ENCODE measurements at regions of chr2 and their contacts with region 1.

Region 1: DNA sequence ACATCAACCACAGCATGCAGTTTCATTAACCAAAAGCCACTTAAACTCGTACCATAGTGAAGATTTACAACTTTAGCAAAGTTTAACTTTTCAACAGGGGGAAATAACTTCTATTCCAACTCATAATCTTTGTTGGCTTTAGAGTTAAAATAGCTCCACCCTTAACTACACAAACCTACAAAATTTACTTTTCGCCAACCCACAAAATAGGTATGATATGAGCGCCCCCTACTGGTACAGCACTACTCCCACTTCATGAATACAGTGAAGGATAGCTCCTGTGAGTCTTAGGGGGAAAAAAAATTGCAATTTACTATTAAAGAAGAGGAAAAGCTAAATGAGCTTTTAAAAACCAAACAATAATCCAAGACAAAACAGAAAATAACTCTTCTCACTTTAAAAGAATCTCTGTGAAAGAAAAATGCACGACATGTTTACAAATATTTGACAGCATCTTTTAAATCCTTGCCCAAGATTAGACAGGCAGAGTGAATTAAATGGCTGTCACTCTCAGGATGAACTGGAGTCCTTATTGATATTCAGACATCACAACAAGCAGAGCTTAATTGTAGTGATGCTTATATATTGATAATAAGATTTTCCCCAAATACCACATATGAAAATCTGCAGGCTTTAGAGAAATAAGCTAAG is 32.2 kb downstream of the TMEFF2 start:
- DNase-seq: peak; percentile 58
- H3K4me3 ChIP-seq: no peak overlapping the region
- H3K27ac ChIP-seq: no peak overlapping the region
- H3K27me3 ChIP-seq: no peaks in the 10 kb centered on the region
- CTCF ChIP-seq: peak; percentile 93

Region 2: GRCh38 chr2:191555092-191555742 is 607.3 kb before region 1 on chr2:
- CTCF ChIA-PET with region 1: interaction called, 51 read pairs
- POLR2A ChIA-PET with region 1: no interaction called
- DNase-seq: peak; percentile 61
- H3K4me3 ChIP-seq: no peak overlapping the region
- H3K27ac ChIP-seq: no peak overlapping the region
- H3K27me3 ChIP-seq: peaks cover 3% of the 10 kb centered on the region
- CTCF ChIP-seq: peak; percentile 76

Region 3: GRCh38 chr2:191800874-191801273 is 361.6 kb before region 1 on chr2:
- CTCF ChIA-PET with region 1: interaction called, 48 read pairs
- POLR2A ChIA-PET with region 1: no interaction called
- DNase-seq: no peak
- H3K4me3 ChIP-seq: no peak overlapping the region
- H3K27ac ChIP-seq: no peak overlapping the region
- H3K27me3 ChIP-seq: no peaks in the 10 kb centered on the region
- CTCF ChIP-seq: no peak

Region 4: DNA sequence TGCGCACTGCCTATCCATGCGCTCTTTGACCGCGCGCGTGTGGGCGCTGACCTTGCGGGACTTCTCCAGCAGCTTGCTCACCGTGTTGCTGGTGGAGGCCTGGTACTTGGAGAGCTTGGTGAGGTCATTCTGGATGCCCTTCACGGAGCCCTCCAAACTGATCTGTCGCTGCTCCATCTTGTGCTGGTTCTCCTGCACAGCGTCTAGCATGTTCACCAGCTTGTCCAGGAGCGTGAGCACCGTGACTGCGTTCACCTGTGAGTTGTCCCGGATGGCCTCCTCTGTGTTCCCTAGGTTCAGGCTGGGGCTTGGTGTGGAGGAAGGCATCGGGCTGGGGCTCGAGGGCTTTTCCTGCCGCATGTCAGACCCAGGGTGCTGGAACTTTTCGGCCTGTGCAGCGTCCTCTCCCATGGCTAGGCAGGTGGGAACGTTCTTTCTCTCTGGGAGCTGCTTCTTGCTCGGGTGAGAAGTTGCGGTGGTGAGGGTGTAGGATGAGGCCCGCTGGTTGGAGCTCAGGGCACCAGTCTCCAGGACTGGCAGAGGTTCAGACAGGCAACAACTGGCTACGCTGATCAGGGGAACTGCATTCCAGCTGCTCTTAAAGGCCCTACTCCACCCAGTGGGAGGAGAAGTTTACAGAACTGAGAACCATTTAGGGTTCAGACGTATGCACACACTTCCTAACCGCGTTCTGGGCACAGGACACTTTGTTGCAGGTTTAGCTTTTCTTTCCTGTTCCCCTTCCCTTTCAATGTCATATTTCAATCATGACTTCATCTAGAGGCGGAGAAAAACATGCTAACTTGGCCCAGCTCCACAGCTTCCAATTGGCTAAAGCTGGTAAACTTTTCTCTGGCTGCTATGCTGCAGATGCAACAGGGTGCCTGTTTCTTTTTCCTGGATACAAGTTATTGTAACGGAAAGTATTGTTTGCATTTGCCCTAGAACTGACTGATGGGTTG is 315.7 kb before region 1 on chr2 and contains the start of gene CAVIN2:
- CTCF ChIA-PET with region 1: interaction called, 50 read pairs
- POLR2A ChIA-PET with region 1: no interaction called
- DNase-seq: peak; percentile 82
- H3K4me3 ChIP-seq: peak within 1 kb of the TSS; percentile 63
- H3K27ac ChIP-seq: peak within 1 kb of the TSS; percentile 93
- H3K27me3 ChIP-seq: no peaks in the 10 kb centered on the region
- CTCF ChIP-seq: no peak
- polyA plus RNA-seq, gene CAVIN2: 22.0 and 26.1 TPM in 2 replicates

Region 5: GRCh38 chr2:191885650-191886049 is 276.9 kb before region 1 on chr2:
- CTCF ChIA-PET with region 1: no interaction called
- POLR2A ChIA-PET with region 1: no interaction called
- DNase-seq: no peak
- H3K4me3 ChIP-seq: no peak overlapping the region
- H3K27ac ChIP-seq: no peak overlapping the region
- H3K27me3 ChIP-seq: no peaks in the 10 kb centered on the region
- CTCF ChIP-seq: no peak

Region 6: GRCh38 chr2:192010073-192010472 is 152.4 kb before region 1 on chr2:
- CTCF ChIA-PET with region 1: interaction called, 20 read pairs
- POLR2A ChIA-PET with region 1: no interaction called
- DNase-seq: no peak
- H3K4me3 ChIP-seq: no peak overlapping the region
- H3K27ac ChIP-seq: no peak overlapping the region
- H3K27me3 ChIP-seq: no peaks in the 10 kb centered on the region
- CTCF ChIP-seq: no peak

Region 7: DNA sequence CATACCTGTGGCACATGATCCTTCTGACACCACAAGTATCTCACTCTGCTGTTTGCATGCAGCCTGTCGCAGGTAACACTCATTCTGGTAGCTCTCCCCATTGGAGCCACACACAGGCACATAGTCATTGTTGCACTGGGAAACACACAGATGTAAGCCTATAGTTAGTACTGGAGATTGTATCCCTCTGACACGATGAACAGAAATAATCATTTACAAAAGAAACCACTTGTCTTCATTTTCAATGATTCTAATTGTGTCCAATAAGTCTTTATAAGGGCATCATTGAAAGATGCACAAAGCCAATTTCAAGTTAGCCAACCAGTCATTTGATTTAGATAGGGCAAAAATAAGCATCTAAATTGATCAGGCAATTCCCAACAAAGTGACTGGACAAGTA is 21.8 kb after region 1 on chr2:
- CTCF ChIA-PET with region 1: interaction called, 17 read pairs
- POLR2A ChIA-PET with region 1: no interaction called
- DNase-seq: no peak
- H3K4me3 ChIP-seq: no peak overlapping the region
- H3K27ac ChIP-seq: no peak overlapping the region
- H3K27me3 ChIP-seq: no peaks in the 10 kb centered on the region
- CTCF ChIP-seq: no peak

Measured in AG04450 (cell line).